ENCODE measurements at regions of chr5 and their contacts with region 1.

Region 1: GRCh38 chr5:14190194-14191164 is 47.3 kb downstream of the TRIO start:
- DNase-seq: peak; percentile 87 to 98
- H3K4me3 ChIP-seq: peak overlapping the region; percentile 30; the same call in 1 of the 2 replicates
- H3K27ac ChIP-seq: peak overlapping the region; percentile 92
- H3K4me1 ChIP-seq: peaks cover 79% of the 10 kb centered on the region
- H3K27me3 ChIP-seq: no peaks in the 10 kb centered on the region
- CTCF ChIP-seq: no peak

Region 2: GRCh38 chr5:14011089-14012004 is 179.1 kb before region 1 on chr5:
- CTCF ChIA-PET with region 1: interaction called, 3 read pairs
- POLR2A ChIA-PET with region 1: interaction called, 5 read pairs
- intact Hi-C with region 1: loop called (anchors 1 kb)
- DNase-seq: peak; percentile 87 to 100
- H3K4me3 ChIP-seq: peak overlapping the region; percentile 63
- H3K27ac ChIP-seq: peak overlapping the region; percentile 75
- H3K4me1 ChIP-seq: peaks cover 40% of the 10 kb centered on the region
- H3K27me3 ChIP-seq: no peaks in the 10 kb centered on the region
- CTCF ChIP-seq: no peak

Region 3: GRCh38 chr5:14165375-14166091 is 24.9 kb before region 1 on chr5:
- CTCF ChIA-PET with region 1: no interaction called
- POLR2A ChIA-PET with region 1: interaction called, 4 read pairs
- intact Hi-C with region 1: loop called (anchors 1 kb)
- DNase-seq: peak; percentile 79 to 80
- H3K4me3 ChIP-seq: no peak overlapping the region
- H3K27ac ChIP-seq: peak overlapping the region; percentile 63
- H3K4me1 ChIP-seq: peaks cover 50% of the 10 kb centered on the region
- H3K27me3 ChIP-seq: no peaks in the 10 kb centered on the region
- CTCF ChIP-seq: no peak

Region 4: DNA sequence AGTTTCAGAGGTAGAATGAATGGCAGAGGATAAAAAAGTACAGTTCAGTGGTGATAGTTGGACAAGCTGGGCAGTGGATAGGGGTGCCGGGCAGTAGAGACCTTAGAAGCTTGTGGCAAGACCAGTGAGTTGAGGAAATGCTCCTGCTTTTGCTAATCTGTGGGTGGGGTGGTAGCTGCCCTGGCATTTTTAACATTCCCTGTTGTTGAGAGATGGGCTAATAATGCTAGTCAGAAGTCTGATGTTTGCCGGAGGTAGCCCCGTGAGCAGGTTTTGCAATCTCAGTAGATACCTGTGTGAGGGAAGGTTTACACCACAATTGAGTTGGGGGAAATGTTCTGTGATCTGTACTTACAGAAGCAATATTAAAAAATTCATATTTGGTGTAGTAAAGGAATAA is 43.7 kb after region 1 on chr5:
- CTCF ChIA-PET with region 1: no interaction called
- POLR2A ChIA-PET with region 1: interaction called, 7 read pairs
- intact Hi-C with region 1: loop called (anchors 1 kb)
- DNase-seq: peak; percentile 93
- H3K4me3 ChIP-seq: no peak overlapping the region
- H3K27ac ChIP-seq: peak overlapping the region; percentile 73
- H3K4me1 ChIP-seq: peaks cover 40% of the 10 kb centered on the region
- H3K27me3 ChIP-seq: no peaks in the 10 kb centered on the region
- CTCF ChIP-seq: no peak

Region 5: GRCh38 chr5:14270209-14270702 is 79.8 kb after region 1 on chr5:
- CTCF ChIA-PET with region 1: interaction called, 8 read pairs
- POLR2A ChIA-PET with region 1: interaction called, 12 read pairs
- intact Hi-C with region 1: loop called (anchors 1 kb)
- DNase-seq: peak; percentile 81 to 86
- H3K4me3 ChIP-seq: 0 out of 2 replicates have a peak overlapping the region, but pooled peaks have one; percentile 8
- H3K27ac ChIP-seq: peak overlapping the region; percentile 88
- H3K4me1 ChIP-seq: peaks cover 57% of the 10 kb centered on the region
- H3K27me3 ChIP-seq: no peaks in the 10 kb centered on the region
- CTCF ChIP-seq: peak; percentile 90

Region 6: GRCh38 chr5:14735944-14736343 is 545.5 kb after region 1 on chr5:
- CTCF ChIA-PET with region 1: no interaction called
- POLR2A ChIA-PET with region 1: no interaction called
- intact Hi-C with region 1: no loop called
- DNase-seq: no peak
- H3K4me3 ChIP-seq: no peak overlapping the region
- H3K27ac ChIP-seq: no peak overlapping the region
- H3K4me1 ChIP-seq: no peaks in the 10 kb centered on the region
- H3K27me3 ChIP-seq: peaks cover 15% of the 10 kb centered on the region; the same call in 1 of the 2 replicates
- CTCF ChIP-seq: no peak